ENCODE measurements at regions of chr18 and their contacts with region 1.

Region 1: GRCh38 chr18:48538531-48539405 is at the start of gene CTIF:
- DNase-seq: peak; percentile 96 to 97
- ATAC-seq: peak; percentile 73 to 74
- H3K4me3 ChIP-seq: peak within 1 kb of the TSS; percentile 74 to 87 (median 84)
- H3K27ac ChIP-seq: peak within 1 kb of the TSS; percentile 89 to 98 (median 94)
- H3K4me1 ChIP-seq: peaks cover 14 to 21% of the 10 kb centered on the region in 2 donors
- H3K27me3 ChIP-seq: no peaks in the 10 kb centered on the region
- CTCF ChIP-seq: no peak
- POLR2A ChIP-seq: peak in 1 of 2 donors; percentile 44
- total RNA-seq, gene CTIF: 20.2 to 35.4 (median 23.1) TPM

Region 2: DNA sequence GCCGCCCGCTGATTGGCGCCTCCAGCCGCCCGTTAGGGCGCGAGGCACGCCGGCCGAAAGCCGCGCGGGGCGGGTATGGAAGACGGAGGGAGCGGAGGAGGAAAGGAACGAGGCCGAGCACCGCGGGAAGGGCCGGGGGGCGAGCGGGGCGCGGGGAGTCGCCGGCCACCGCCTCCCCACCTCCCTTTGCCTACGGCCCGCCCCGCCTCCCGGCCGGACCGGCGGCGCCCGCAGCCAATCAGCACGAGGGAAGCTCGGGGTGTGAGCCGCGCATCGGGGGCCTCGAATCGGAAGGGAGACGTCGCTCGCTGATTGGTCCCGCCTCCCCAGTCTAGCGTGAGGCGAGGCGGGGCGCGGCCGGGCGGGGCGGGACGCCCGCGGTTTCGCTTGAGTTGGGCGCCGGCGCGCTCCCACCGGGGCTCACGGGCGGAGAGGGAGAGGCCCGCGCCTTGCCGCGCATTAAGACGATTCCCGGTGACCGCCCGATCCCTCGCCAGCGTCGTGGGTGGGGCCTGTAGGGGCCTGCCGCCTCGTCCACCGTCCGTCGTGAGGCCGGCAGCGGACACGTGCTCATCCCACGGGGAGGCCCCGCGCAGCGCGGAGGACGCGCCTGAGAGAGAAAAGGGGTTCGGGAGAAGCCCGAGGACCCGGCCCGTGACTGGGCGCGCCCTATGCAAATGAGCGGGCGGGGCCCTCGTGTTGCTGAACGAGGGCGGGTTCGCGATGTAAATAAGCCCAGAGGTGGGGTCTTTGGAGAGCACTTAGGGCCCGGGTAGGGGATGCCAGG is 607.6 kb before region 1 on chr18:
- in situ Hi-C with region 1: no loop called
- intact Hi-C with region 1: loop called (anchors 2 kb)
- DNase-seq: peak; percentile 97
- ATAC-seq: peak; percentile 88
- H3K4me3 ChIP-seq: peak overlapping the region; percentile 60 to 84 (median 82)
- H3K27ac ChIP-seq: peak overlapping the region; percentile 92 to 97 (median 94)
- H3K4me1 ChIP-seq: peaks cover 32 to 38% of the 10 kb centered on the region in 2 donors
- H3K27me3 ChIP-seq: no peaks in the 10 kb centered on the region
- CTCF ChIP-seq: peak in 1 of 5 experiments; percentile 9
- POLR2A ChIP-seq: peak; percentile 86 to 91

Region 3: GRCh38 chr18:48319801-48320638 is 218.7 kb before region 1 on chr18:
- in situ Hi-C with region 1: no loop called
- intact Hi-C with region 1: no loop called
- DNase-seq: no peak
- ATAC-seq: no peak
- H3K4me3 ChIP-seq: no peak overlapping the region
- H3K27ac ChIP-seq: no peak overlapping the region
- H3K4me1 ChIP-seq: no peaks in the 10 kb centered on the region
- H3K27me3 ChIP-seq: no peaks in the 10 kb centered on the region
- CTCF ChIP-seq: no peak
- POLR2A ChIP-seq: no peak

Region 4: DNA sequence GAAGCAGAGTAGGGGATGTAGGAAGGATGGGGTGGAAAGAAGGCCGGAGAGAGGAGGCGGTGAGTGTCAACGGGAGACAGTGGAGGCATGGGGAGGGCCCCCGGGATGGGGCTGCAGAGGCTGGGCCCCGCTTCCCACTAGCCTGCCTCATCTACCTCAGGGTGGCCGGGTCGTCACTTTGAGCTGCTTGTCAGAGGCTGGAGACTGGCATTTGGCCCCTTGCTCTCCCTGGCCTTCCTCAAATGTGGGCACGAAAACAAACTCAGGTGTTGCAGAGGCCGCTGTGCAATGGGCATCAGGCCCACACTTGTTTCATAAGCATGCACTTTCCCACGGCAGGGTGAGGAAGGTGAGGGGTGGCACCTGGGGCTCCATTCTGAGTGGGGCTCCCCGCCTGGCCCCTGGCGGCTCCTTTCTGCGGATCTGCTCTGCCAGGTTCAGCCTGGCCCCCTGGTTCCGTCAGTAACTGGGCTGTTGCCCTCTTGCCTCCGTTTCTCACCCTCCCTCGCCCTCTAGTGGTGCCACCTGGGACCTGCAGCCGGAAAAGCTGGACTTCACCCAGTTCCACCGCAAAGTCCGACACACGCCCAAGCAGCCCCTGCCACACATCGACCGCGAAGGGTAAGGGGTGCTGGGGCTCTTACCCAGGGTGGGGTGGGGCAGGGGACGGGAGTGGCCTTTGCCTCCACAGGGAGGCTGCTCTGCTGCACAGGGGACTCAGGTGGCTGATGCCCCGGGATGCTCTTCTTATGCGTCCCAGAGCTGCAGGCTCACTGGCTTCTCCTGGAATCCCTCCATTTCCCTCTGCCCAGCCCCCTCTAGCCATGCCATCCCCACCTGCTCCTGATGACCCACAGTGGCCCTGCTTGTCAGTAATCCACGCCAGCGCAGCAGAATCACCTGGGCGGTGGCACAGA is 125.4 kb after region 1 on chr18:
- in situ Hi-C with region 1: no loop called
- intact Hi-C with region 1: loop called (anchors 2 kb)
- DNase-seq: peak; percentile 41 to 60
- ATAC-seq: peak; percentile 64 to 70
- H3K4me3 ChIP-seq: no peak overlapping the region
- H3K27ac ChIP-seq: no peak overlapping the region
- H3K4me1 ChIP-seq: peaks cover 6 to 23% of the 10 kb centered on the region in 2 donors
- H3K27me3 ChIP-seq: no peaks in the 10 kb centered on the region
- CTCF ChIP-seq: peak; percentile 81 to 92 (median 90)
- POLR2A ChIP-seq: no peak

Region 5: GRCh38 chr18:48928787-48929186 is 390.0 kb after region 1 on chr18:
- in situ Hi-C with region 1: loop called in 1 of 4 experiments (anchors 25 kb)
- intact Hi-C with region 1: loop called (anchors 5 kb)
- DNase-seq: no peak
- ATAC-seq: no peak
- H3K4me3 ChIP-seq: no peak overlapping the region
- H3K27ac ChIP-seq: peak overlapping the region in 2 of 4 donors; percentile 0 to 36
- H3K4me1 ChIP-seq: peaks cover 73 to 97% of the 10 kb centered on the region in 2 donors
- H3K27me3 ChIP-seq: no peaks in the 10 kb centered on the region
- CTCF ChIP-seq: no peak
- POLR2A ChIP-seq: no peak

Region 6: DNA sequence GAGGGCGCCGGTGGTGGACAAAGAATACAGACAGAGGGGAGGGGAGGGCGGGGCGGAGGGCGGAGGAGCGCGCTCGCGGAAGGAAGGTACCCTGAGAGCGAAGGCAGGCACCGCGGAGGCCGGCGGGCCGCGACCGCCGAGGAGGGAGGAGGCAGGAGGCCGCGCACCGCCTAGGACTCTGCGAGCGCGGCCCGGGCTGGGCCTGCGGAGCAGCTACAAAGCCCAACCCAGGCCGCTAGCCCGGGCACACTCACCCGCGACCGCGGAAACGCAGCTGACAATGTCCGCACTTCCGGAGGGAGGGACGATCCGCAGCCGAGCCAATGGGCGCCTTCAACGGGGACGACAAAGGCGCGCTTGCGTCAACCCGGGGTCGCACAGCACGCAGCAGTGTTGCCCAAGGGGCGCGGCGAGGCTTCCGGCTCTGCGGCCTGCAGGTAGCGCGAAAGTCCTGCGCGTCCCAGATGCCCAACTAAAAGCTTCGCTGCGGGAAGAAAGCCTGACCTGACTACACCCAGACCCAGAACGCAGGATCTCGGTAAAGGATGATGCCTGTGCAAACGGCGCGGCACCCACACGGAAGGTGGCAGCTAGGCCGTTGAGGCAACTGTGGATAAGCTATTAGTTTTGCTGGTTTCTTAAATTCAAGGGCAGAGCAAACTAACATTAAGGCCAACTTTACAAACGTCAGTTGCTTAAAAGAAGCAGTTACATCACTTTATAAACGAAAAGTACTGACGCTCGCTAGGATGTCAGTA is 948.4 kb after region 1 on chr18 and contains the start of gene C18orf32:
- in situ Hi-C with region 1: no loop called
- intact Hi-C with region 1: loop called (anchors 10 kb)
- DNase-seq: peak; percentile 92 to 95
- ATAC-seq: peak; percentile 96
- H3K4me3 ChIP-seq: peak within 1 kb of the TSS; percentile 82 to 93 (median 90)
- H3K27ac ChIP-seq: peak within 1 kb of the TSS; percentile 94 to 98 (median 98)
- H3K4me1 ChIP-seq: peaks cover 38 to 40% of the 10 kb centered on the region in 2 donors
- H3K27me3 ChIP-seq: no peaks in the 10 kb centered on the region
- CTCF ChIP-seq: no peak
- POLR2A ChIP-seq: peak; percentile 97 to 99
- total RNA-seq, gene C18orf32: 14.0 to 28.2 (median 19.6) TPM

Region 7: DNA sequence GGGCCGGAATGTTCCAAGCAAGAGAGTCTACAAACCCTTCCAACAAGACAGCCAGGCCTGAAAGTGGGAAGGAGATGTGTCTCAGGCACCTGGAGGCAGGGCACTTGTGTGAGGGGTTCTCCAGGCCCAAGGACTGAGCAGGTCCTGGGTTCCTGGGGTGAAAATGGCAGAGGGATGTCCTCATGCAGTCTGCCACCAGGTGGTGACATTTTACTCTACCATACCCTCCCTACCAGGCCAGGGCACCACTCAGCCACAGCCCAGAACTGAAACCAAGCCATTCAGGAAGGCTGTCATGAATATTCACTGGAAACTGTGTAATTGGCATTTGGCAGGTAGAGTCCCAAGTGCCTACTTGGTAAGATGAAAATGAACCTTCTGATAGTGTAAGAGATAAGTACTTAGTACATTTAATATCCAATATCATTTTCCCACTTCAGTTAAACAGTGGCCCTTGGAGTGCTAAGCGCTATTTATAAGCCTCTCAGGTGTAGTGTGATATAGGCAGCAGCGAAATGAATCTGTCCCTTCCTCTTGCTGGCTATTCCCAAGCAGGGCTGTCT is 1471.1 kb after region 1 on chr18:
- in situ Hi-C with region 1: no loop called
- intact Hi-C with region 1: loop called (anchors 10 kb)
- DNase-seq: peak in 1 of 2 donors; percentile 17
- ATAC-seq: peak in 1 of 2 donors; percentile 45
- H3K4me3 ChIP-seq: no peak overlapping the region
- H3K27ac ChIP-seq: no peak overlapping the region
- H3K4me1 ChIP-seq: peaks cover 4 to 22% of the 10 kb centered on the region in 2 donors
- H3K27me3 ChIP-seq: no peaks in the 10 kb centered on the region
- CTCF ChIP-seq: peak; percentile 22 to 55 (median 51)
- POLR2A ChIP-seq: no peak

Measured in gastrocnemius medialis (tissue), 4 donors.